ENCODE measurements at regions of chr16 and their contacts with region 1.

Region 1: GRCh38 chr16:67043420-67043819 is 14.5 kb downstream of the CBFB start:
- DNase-seq: no peak
- ATAC-seq: no peak
- H3K4me3 ChIP-seq: no peak overlapping the region
- H3K27ac ChIP-seq: no peak overlapping the region
- H3K4me1 ChIP-seq: peaks cover 21% of the 10 kb centered on the region
- H3K27me3 ChIP-seq: no peaks in the 10 kb centered on the region
- CTCF ChIP-seq: no peak
- EP300 ChIP-seq: no peak
- POLR2A ChIP-seq: no peak
- RAD21 ChIP-seq: no peak

Region 2: GRCh38 chr16:67028555-67029248 is 14.7 kb before region 1 on chr16 and contains the start of gene CBFB:
- CTCF ChIA-PET with region 1: interaction called, 7 read pairs
- POLR2A ChIA-PET with region 1: interaction called, 14 read pairs
- RAD21 ChIA-PET with region 1: interaction called, 6 read pairs
- SMC1A ChIA-PET with region 1: interaction called, 13 read pairs
- in situ Hi-C with region 1: no loop called
- intact Hi-C with region 1: no loop called
- DNase-seq: peak; percentile 75
- ATAC-seq: peak; percentile 89
- H3K4me3 ChIP-seq: peak within 1 kb of the TSS; percentile 72
- H3K27ac ChIP-seq: peak within 1 kb of the TSS; percentile 99
- H3K4me1 ChIP-seq: peaks cover 13% of the 10 kb centered on the region
- H3K27me3 ChIP-seq: no peaks in the 10 kb centered on the region
- CTCF ChIP-seq: no peak
- EP300 ChIP-seq: no peak
- POLR2A ChIP-seq: peak; percentile 98
- RAD21 ChIP-seq: no peak
- polyA plus RNA-seq, gene CBFB: 25.3 to 43.6 TPM

Region 3: GRCh38 chr16:67055712-67056487 is 12.5 kb after region 1 on chr16:
- CTCF ChIA-PET with region 1: interaction called, 4 read pairs
- POLR2A ChIA-PET with region 1: interaction called, 5 read pairs
- RAD21 ChIA-PET with region 1: interaction called, 5 read pairs
- SMC1A ChIA-PET with region 1: interaction called, 11 read pairs
- in situ Hi-C with region 1: no loop called
- intact Hi-C with region 1: no loop called
- DNase-seq: no peak
- ATAC-seq: peak; percentile 77
- H3K4me3 ChIP-seq: no peak overlapping the region
- H3K27ac ChIP-seq: peak overlapping the region; percentile 48; the same call in 1 of the 2 replicates
- H3K4me1 ChIP-seq: peaks cover 4% of the 10 kb centered on the region
- H3K27me3 ChIP-seq: no peaks in the 10 kb centered on the region
- CTCF ChIP-seq: no peak
- EP300 ChIP-seq: 0 out of 4 replicates have a peak, but pooled peaks of 1 of the 2 experiments have one; percentile 8
- POLR2A ChIP-seq: no peak
- RAD21 ChIP-seq: no peak

Measured in GM12878 (cell line).